SK-N-SH (cell line): ENCODE measurements at regions of chr11 and their contacts with region 1.

Region 1: GRCh38 chr11:133927690-133928627 is 28.8 kb downstream of the IGSF9B start:
- DNase-seq: peak; percentile 94
- H3K4me3 ChIP-seq: peak overlapping the region in 1 of 2 experiments; percentile 44; a peak in 1 of 4 replicates
- H3K27ac ChIP-seq: peak overlapping the region in 1 of 2 experiments; percentile 89; a peak in 2 of 4 replicates
- H3K4me1 ChIP-seq: peaks cover 0 to 36% of the 10 kb centered on the region in 2 experiments; a peak in 1 of 4 replicates
- H3K27me3 ChIP-seq: no peaks in the 10 kb centered on the region
- CTCF ChIP-seq: peak; percentile 77
- EP300 ChIP-seq: no peak
- RAD21 ChIP-seq: peak; percentile 97

Region 2: DNA sequence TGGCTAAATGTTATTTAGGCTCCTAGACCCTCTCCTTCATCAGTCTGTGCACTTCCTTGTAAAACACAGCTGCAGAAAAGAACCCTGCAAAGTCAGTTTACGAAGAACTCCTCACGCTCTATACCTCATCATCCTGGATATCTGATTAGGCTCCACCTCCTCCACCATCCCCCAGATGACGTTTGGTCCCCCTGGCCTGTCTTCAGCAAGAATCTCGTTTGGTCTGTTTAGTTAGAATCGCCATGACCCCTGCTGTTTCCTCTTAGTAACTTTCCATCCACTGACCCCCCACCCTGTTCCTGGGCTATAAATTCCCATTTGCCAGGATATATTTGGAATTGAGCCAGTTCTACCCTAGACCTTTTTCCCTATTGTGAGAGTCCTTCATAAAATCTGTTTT is 609.7 kb before region 1 on chr11:
- CTCF ChIA-PET with region 1: no interaction called
- POLR2A ChIA-PET with region 1: no interaction called
- DNase-seq: no peak
- H3K4me3 ChIP-seq: no peak overlapping the region
- H3K27ac ChIP-seq: no peak overlapping the region
- H3K4me1 ChIP-seq: no peaks in the 10 kb centered on the region
- H3K27me3 ChIP-seq: no peaks in the 10 kb centered on the region
- CTCF ChIP-seq: no peak
- EP300 ChIP-seq: no peak
- RAD21 ChIP-seq: no peak

Region 3: GRCh38 chr11:133911171-133911570 is 16.8 kb before region 1 on chr11:
- CTCF ChIA-PET with region 1: interaction called, 17 read pairs
- POLR2A ChIA-PET with region 1: no interaction called
- DNase-seq: peak; percentile 61
- H3K4me3 ChIP-seq: no peak overlapping the region
- H3K27ac ChIP-seq: no peak overlapping the region
- H3K4me1 ChIP-seq: no peaks in the 10 kb centered on the region
- H3K27me3 ChIP-seq: no peaks in the 10 kb centered on the region
- CTCF ChIP-seq: no peak
- EP300 ChIP-seq: no peak
- RAD21 ChIP-seq: peak; percentile 33; the same call in 1 of the 2 replicates

Region 4: GRCh38 chr11:133947321-133947756 is 19.4 kb after region 1 on chr11:
- CTCF ChIA-PET with region 1: interaction called, 200 read pairs
- POLR2A ChIA-PET with region 1: interaction called, 16 read pairs
- DNase-seq: peak; percentile 77
- H3K4me3 ChIP-seq: peak overlapping the region in 1 of 2 experiments; percentile 15; a peak in 1 of 4 replicates
- H3K27ac ChIP-seq: peak overlapping the region in 1 of 2 experiments; percentile 89; a peak in 2 of 4 replicates
- H3K4me1 ChIP-seq: peaks cover 0 to 100% of the 10 kb centered on the region in 2 experiments; a peak in 1 of 4 replicates
- H3K27me3 ChIP-seq: no peaks in the 10 kb centered on the region; the same call in 1 of the 2 replicates
- CTCF ChIP-seq: peak; percentile 53
- EP300 ChIP-seq: no peak
- RAD21 ChIP-seq: peak; percentile 61

Region 5: DNA sequence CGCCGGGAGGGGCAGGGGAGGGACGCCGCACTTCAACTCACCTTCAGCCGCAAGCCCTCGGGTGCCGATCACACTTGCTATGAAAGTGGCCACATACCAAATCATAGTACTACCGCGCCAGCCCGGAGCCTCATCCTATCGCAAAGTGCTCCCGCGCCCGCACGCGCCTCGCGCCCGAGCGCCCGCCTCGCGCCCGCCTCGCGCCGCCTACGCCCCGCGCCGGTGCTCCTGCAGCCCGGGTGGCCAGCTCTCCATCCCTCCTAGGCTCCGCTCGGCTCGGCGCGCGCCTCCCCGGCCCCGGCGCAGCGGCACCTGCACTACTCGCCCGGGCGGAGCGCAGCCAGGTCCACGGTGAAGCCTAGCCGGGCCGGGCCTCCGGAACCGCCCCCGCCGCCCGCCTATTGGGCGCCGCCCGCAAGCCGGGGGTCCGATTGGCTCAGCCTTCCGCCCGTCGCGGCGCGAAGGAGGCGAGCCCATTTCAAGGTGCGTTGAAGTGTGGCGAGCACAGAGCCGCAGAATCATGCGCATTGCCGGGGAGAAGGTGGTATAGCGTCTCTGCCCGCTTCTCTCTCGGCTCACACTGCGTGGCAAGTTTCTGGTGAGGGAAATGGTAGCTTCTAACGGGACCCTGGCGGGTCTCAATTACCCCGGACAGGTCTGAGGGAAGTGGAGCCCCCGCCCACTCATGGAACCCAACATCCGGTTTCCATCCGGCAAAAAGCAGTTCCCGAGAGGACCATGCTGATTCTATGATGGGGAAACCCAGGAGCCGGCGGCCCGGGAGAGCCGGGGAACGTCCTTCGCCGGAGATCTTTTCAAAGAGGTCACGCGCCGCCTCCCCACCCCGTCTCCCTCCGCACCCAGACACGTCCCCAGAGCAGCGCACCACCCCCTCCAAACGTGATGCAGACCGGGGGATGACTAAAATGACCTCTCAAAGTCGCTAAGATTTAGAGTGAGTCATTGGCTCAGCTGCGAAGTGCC is 29.0 kb after region 1 on chr11 and contains the start of gene IGSF9B:
- CTCF ChIA-PET with region 1: interaction called, 200 read pairs
- POLR2A ChIA-PET with region 1: interaction called, 3 read pairs
- DNase-seq: peak; percentile 98
- H3K4me3 ChIP-seq: peak within 1 kb of the TSS; percentile 63 to 64
- H3K27ac ChIP-seq: peak within 1 kb of the TSS in 1 of 2 experiments; percentile 91; a peak in 2 of 4 replicates
- H3K4me1 ChIP-seq: peaks cover 0 to 41% of the 10 kb centered on the region in 2 experiments; a peak in 2 of 4 replicates
- H3K27me3 ChIP-seq: peaks cover 17% of the 10 kb centered on the region
- CTCF ChIP-seq: no peak
- EP300 ChIP-seq: no peak
- RAD21 ChIP-seq: no peak
- polyA plus RNA-seq, gene IGSF9B: 0.41 and 0.96 TPM in 2 replicates

Region 6: DNA sequence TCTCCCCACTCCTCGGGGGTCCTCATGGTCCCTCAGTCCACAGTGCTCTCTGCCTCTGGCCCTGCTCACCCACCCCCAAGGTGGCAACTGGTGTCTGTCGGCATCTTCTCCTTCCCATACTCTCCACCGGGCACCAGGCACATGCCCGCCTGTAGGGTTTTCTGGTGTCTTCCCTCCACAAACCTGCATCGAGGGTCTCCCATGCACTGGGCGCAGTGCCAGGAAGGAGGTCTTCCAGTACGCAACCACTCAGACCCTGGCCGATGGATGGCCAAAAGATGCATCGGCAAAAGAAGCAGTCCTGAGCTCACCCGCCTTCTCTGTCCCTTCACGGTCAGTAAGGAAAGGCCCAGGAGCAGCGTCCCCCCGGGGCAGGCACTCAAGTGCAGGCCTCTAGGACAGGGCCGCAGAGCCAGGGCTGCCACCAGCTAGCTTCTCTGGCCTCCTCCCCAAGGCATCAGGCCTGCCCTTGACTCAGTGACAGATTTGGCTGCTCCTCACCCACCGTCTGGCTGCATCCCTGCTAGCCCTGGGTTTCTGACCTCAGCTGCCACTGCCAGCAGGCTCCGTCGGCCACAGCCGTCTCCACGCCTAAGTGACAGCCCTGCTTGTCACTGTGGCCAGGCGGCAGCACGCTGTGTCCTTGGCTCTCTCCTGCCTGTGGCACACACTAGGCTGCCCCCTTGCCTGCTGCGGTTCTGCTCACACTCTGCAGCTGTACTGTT is 60.9 kb after region 1 on chr11:
- CTCF ChIA-PET with region 1: interaction called, 23 read pairs
- POLR2A ChIA-PET with region 1: no interaction called
- DNase-seq: no peak
- H3K4me3 ChIP-seq: no peak overlapping the region
- H3K27ac ChIP-seq: no peak overlapping the region; a peak in 1 of 4 replicates
- H3K4me1 ChIP-seq: peaks cover 0 to 39% of the 10 kb centered on the region in 2 experiments; a peak in 2 of 4 replicates
- H3K27me3 ChIP-seq: no peaks in the 10 kb centered on the region; the same call in 1 of the 2 replicates
- CTCF ChIP-seq: no peak
- EP300 ChIP-seq: no peak
- RAD21 ChIP-seq: no peak

Region 7: GRCh38 chr11:134033696-134034491 is 105.9 kb after region 1 on chr11:
- CTCF ChIA-PET with region 1: interaction called, 293 read pairs
- POLR2A ChIA-PET with region 1: interaction called, 5 read pairs
- DNase-seq: peak; percentile 88
- H3K4me3 ChIP-seq: peak overlapping the region in 1 of 2 experiments; percentile 25; a peak in 2 of 4 replicates
- H3K27ac ChIP-seq: peak overlapping the region in 1 of 2 experiments; percentile 95; a peak in 2 of 4 replicates
- H3K4me1 ChIP-seq: peaks cover 13 to 59% of the 10 kb centered on the region in 2 experiments
- H3K27me3 ChIP-seq: peaks cover 4% of the 10 kb centered on the region; the same call in 1 of the 2 replicates
- CTCF ChIP-seq: no peak
- EP300 ChIP-seq: peak in 1 of 2 experiments; percentile 25; a peak in 1 of 4 replicates
- RAD21 ChIP-seq: no peak; the same call in 1 of the 2 replicates

Region 8: DNA sequence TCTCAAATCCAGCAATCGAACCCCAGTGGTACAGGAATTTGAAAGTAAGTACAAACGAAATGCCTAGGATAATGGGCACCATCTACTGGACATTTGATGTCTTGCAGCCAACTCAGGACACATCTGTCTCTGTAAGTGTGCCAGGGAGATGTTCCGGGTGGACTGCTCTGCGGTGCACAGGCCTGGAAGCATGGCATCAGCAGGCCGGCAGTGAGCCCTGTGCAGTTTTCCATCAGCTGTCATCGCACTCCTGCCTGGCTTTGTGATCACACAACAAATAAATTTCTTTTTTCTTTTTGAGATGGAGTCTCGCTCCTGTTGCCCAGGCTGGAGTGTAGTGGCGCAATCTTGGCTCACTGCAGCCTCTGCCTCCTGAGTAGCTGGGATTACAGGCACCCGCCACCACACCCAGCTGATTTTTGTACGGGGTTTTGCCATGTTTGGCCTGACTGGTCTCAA is 211.9 kb after region 1 on chr11:
- CTCF ChIA-PET with region 1: interaction called, 45 read pairs
- POLR2A ChIA-PET with region 1: no interaction called
- DNase-seq: peak; percentile 83
- H3K4me3 ChIP-seq: peak overlapping the region in 1 of 2 experiments; percentile 18; a peak in 1 of 4 replicates
- H3K27ac ChIP-seq: no peak overlapping the region; a peak in 1 of 4 replicates
- H3K4me1 ChIP-seq: no peaks in the 10 kb centered on the region; a peak in 1 of 4 replicates
- H3K27me3 ChIP-seq: no peaks in the 10 kb centered on the region
- CTCF ChIP-seq: peak; percentile 89
- EP300 ChIP-seq: no peak
- RAD21 ChIP-seq: peak; percentile 96